Activated CD4-positive, alpha-beta T cell treated with anti-CD3 and anti-CD28 coated beads for 36 hours (primary cell): ENCODE measurements at regions of chr1 and their contacts with region 1.

Region 1: GRCh38 chr1:156728597-156729462 is at the start of gene ISG20L2:
- DNase-seq: peak; percentile 99
- ATAC-seq: peak; percentile 92
- H3K4me3 Mint-ChIP-seq: no peak within 1 kb of the TSS
- H3K27ac Mint-ChIP-seq: peak within 1 kb of the TSS; percentile 99
- H3K4me1 Mint-ChIP-seq: peaks cover 23% of the 10 kb centered on the region
- H3K27me3 Mint-ChIP-seq: no peaks in the 10 kb centered on the region
- total RNA-seq, gene ISG20L2: 48.4 to 65.2 TPM

Region 2: GRCh38 chr1:156338180-156338973 is 390.5 kb before region 1 on chr1 and contains the starts of genes CCT3 and TSACC:
- CTCF ChIA-PET with region 1: no interaction called
- POLR2A ChIA-PET with region 1: no interaction called
- intact Hi-C with region 1: loop called in 1 of 2 experiments (anchors 1 kb)
- DNase-seq: peak; percentile 99
- ATAC-seq: peak; percentile 96
- H3K4me3 Mint-ChIP-seq: peak within 1 kb of the TSS; percentile 98
- H3K27ac Mint-ChIP-seq: peak within 1 kb of the TSS; percentile 96
- H3K4me1 Mint-ChIP-seq: peaks cover 29% of the 10 kb centered on the region
- H3K27me3 Mint-ChIP-seq: no peaks in the 10 kb centered on the region
- total RNA-seq, gene CCT3: 297 to 406 TPM
- total RNA-seq, gene TSACC: 0.25 to 0.83 TPM

Region 3: DNA sequence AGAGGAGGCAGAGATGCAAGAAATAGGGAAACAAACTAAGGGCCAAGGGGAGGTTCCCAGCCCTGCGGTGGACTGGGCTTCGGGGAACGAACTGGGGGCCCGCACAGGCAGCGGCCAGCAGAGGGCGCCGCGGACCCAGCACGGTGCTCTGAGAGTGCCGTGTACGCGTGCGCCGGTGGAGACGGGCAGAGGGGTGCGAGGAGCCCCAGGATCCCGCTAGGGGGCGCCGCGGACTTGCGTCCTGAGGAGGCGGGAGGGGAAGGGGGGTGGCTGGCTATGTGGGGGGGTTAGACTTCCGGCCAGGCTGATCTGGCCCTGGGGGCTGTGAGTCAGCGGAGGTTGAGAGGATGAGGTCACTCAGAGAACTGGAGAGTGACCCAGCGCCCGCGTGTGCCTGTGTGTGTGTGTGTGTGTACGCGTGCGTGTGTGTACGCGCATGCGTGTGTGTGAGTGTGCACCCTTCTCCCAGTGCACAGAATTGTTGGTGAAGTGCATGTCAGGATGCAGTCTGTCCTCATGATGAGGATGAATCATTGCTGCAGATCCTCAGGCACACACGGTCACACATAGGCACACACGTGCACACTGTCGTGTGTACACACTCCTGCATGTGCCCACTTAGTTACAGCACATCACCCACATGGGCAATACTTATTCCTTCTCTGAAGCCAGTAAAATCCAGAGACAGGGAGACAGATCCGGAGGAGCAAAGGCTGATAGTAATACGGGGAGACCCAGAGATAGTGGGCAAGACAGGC is 68.7 kb before region 1 on chr1:
- CTCF ChIA-PET with region 1: interaction called, 54 read pairs
- POLR2A ChIA-PET with region 1: interaction called, 5 read pairs
- intact Hi-C with region 1: loop called in 1 of 2 experiments (anchors 1 kb)
- DNase-seq: peak; percentile 98
- ATAC-seq: peak; percentile 88
- H3K4me3 Mint-ChIP-seq: peak overlapping the region; percentile 80
- H3K27ac Mint-ChIP-seq: peak overlapping the region; percentile 74
- H3K4me1 Mint-ChIP-seq: peaks cover 48% of the 10 kb centered on the region
- H3K27me3 Mint-ChIP-seq: peaks cover 27% of the 10 kb centered on the region

Region 4: DNA sequence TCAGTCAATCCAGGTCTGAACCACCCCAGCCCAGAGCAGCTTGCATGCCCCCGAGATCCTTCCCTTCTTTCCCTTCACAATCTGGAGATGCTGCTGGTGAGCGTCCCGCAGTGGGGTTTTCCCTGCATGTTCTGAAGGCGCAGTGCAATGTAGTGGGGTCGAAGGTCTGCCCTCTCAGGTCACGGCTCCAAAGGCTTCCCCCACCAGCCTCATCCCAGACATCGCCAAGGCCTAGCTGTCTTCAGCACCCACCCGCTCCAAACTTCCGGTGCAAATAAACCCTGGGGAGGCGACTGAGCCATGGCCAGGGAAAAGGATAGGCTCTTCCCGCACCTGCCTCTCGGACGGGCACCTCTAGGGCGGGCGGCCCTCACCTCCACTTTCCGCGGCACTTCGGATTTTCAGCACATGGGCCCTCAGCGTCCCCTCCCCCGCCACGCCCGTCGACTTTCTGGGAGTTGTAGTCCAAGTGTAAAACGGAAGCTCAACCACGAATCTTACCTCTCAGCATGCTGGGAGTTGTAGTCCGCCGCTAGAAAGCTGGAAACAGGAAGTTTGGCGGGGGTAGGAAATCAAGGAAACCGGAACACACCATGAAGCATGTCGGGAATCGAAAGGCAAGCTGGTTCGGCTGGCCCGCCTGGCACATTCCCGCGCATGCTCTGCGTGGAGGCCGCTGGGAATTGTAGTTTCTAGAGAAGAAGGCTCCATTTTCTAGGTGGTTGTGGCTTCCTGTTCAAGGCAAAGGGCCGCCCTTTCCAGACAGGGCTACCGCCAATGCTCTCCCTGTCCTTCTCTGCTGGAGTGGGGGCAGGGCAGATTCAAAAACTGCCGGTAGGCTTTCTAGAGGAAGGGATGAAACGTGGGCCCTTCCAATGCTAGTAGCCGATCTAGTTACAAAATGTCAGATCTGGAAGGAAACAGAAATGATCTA is 12.1 kb after region 1 on chr1 and contains the start of gene MRPL24:
- CTCF ChIA-PET with region 1: interaction called, 73 read pairs
- POLR2A ChIA-PET with region 1: interaction called, 55 read pairs
- intact Hi-C with region 1: loop called (anchors 1 kb)
- DNase-seq: peak; percentile 98
- ATAC-seq: peak; percentile 86
- H3K4me3 Mint-ChIP-seq: peak within 1 kb of the TSS; percentile 98
- H3K27ac Mint-ChIP-seq: peak within 1 kb of the TSS; percentile 94
- H3K4me1 Mint-ChIP-seq: peaks cover 49% of the 10 kb centered on the region
- H3K27me3 Mint-ChIP-seq: no peaks in the 10 kb centered on the region
- total RNA-seq, gene MRPL24: 81.9 to 89.7 TPM

Region 5: DNA sequence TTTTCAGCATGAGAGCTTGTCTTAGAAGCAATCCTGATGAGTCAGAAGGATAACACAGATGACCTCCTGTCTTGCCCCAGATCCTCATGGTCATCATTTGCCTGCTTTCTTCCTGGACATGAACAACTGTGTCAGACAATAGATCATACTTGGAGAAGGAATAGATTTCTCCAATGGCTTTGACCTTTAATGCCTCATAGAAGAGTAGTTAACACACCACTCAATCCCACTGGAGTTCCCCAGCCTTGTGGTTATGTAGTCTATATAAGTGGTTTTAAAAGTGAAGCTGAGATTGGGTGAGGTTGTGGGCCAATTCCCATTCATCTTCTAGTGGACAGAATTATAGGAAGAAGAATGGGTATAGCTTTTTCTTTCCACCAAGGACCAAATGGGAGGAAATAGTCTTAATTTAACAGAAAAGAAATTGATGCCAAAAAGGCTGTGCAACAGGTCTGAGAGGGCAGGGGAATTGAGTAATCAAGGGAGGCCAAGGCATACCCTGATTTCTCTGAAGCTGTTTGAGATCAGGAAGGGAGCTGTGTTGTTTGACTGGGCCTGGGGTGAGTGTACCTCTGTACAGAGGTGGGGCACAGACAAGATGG is 52.9 kb after region 1 on chr1:
- CTCF ChIA-PET with region 1: interaction called, 19 read pairs
- POLR2A ChIA-PET with region 1: no interaction called
- intact Hi-C with region 1: no loop called
- DNase-seq: no peak
- ATAC-seq: peak; percentile 61
- H3K4me3 Mint-ChIP-seq: no peak overlapping the region
- H3K27ac Mint-ChIP-seq: no peak overlapping the region
- H3K4me1 Mint-ChIP-seq: peaks cover 27% of the 10 kb centered on the region
- H3K27me3 Mint-ChIP-seq: no peaks in the 10 kb centered on the region

Region 6: GRCh38 chr1:156892190-156893047 is 163.6 kb after region 1 on chr1:
- CTCF ChIA-PET with region 1: interaction called, 27 read pairs
- POLR2A ChIA-PET with region 1: interaction called, 3 read pairs
- intact Hi-C with region 1: loop called in 1 of 2 experiments (anchors 1 kb)
- DNase-seq: peak; percentile 95
- ATAC-seq: peak; percentile 97
- H3K4me3 Mint-ChIP-seq: peak overlapping the region; percentile 55
- H3K27ac Mint-ChIP-seq: no peak overlapping the region
- H3K4me1 Mint-ChIP-seq: peaks cover 14% of the 10 kb centered on the region
- H3K27me3 Mint-ChIP-seq: peaks cover 39% of the 10 kb centered on the region